ENCODE measurements at regions of chr11 and their contacts with region 1.

Region 1: GRCh38 chr11:112280268-112281126 is 19.8 kb upstream of the PLET1 start:
- DNase-seq: peak; percentile 63
- H3K4me3 ChIP-seq: peak overlapping the region; percentile 55
- H3K27ac ChIP-seq: no peak overlapping the region
- H3K27me3 ChIP-seq: peaks cover 16% of the 10 kb centered on the region
- CTCF ChIP-seq: peak; percentile 81

Region 2: GRCh38 chr11:111926505-111927391 is 353.7 kb before region 1 on chr11:
- CTCF ChIA-PET with region 1: interaction called, 12 read pairs
- POLR2A ChIA-PET with region 1: no interaction called
- DNase-seq: peak; percentile 95
- H3K4me3 ChIP-seq: peak overlapping the region; percentile 59
- H3K27ac ChIP-seq: peak overlapping the region; percentile 47
- H3K27me3 ChIP-seq: no peaks in the 10 kb centered on the region
- CTCF ChIP-seq: no peak

Region 3: DNA sequence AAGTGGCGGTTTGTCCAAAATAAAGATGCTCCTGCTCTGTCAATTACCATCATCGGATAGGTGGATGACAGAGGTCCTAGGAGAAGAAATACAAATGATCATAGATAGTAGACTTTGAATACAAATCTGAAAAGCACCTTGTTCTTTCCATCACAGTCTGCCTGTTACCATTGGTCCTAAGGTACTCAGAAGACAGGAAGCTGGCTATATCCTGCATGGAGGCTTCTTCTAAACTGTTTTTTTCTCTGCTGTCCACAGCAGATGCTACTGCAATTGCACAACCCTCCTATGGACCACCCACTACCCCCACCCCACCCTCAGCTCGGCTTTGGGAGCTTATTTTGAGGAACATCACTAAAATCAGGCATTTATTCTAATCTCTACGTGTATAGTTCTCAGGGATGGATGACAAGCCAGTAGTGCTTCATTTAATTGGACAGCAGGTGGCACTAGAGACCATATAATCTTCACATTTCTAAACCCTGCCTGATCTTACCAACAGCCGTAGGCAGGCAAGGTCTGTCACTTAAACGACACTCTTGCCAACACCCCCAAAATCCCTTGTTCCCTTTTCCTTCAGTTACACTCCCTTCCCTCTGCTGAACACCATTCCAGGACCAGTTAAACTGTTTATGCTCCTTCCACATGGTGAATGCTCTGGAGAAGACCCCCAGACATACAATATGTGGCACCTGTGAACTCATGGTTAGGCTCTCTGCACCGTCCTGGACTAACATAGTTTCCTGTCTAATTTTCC is 60.8 kb before region 1 on chr11:
- CTCF ChIA-PET with region 1: interaction called, 711 read pairs
- POLR2A ChIA-PET with region 1: interaction called, 10 read pairs
- DNase-seq: peak; percentile 52
- H3K4me3 ChIP-seq: no peak overlapping the region
- H3K27ac ChIP-seq: no peak overlapping the region
- H3K27me3 ChIP-seq: no peaks in the 10 kb centered on the region
- CTCF ChIP-seq: peak; percentile 75

Region 4: GRCh38 chr11:112255067-112255720 is 25.3 kb before region 1 on chr11:
- CTCF ChIA-PET with region 1: interaction called, 17 read pairs
- POLR2A ChIA-PET with region 1: no interaction called
- DNase-seq: no peak
- H3K4me3 ChIP-seq: no peak overlapping the region
- H3K27ac ChIP-seq: no peak overlapping the region
- H3K27me3 ChIP-seq: no peaks in the 10 kb centered on the region
- CTCF ChIP-seq: no peak

Region 5: DNA sequence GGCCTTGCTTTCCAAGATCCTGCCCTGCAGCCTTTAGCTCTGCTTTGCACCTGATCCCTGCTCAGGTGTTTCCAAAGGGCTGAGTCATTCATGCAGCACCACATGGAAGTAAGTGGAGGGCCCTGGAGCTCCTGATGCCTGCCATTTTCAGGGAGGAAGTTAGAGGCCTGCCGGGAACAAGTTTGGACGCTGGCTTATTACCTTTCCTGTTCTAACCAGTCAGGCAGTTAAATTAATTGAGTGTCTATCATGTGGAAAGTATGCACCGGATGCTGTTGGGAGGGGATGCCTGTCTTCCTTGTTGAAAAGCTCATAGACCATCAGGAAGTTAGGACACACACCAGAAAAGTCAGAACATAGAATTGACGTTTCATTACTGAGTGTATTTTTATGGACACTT is 53.9 kb after region 1 on chr11:
- CTCF ChIA-PET with region 1: interaction called, 11 read pairs
- POLR2A ChIA-PET with region 1: no interaction called
- DNase-seq: no peak
- H3K4me3 ChIP-seq: no peak overlapping the region
- H3K27ac ChIP-seq: no peak overlapping the region
- H3K27me3 ChIP-seq: no peaks in the 10 kb centered on the region
- CTCF ChIP-seq: no peak

Region 6: DNA sequence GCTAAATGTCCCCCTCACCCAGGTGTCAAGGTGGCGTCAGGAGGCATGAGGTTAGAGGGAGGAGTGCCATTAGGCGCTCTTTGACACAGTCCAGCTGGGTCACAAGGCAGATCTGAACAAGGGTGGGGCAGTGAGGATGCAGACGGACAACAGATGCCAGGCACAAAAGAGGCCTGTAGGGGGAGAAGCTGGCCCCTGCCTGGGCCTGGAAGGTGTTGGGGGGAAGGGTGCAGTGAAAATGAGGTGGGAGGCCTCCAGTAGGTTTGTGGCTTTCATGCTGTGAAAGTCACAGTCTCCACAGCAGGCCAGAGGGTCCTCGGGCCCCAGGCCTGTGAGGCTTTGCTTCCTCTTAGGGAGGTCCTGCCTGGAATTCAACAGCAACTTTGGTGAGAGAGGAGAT is 65.2 kb after region 1 on chr11:
- CTCF ChIA-PET with region 1: no interaction called
- POLR2A ChIA-PET with region 1: no interaction called
- DNase-seq: no peak
- H3K4me3 ChIP-seq: no peak overlapping the region
- H3K27ac ChIP-seq: no peak overlapping the region
- H3K27me3 ChIP-seq: no peaks in the 10 kb centered on the region
- CTCF ChIP-seq: peak; percentile 31

Region 7: DNA sequence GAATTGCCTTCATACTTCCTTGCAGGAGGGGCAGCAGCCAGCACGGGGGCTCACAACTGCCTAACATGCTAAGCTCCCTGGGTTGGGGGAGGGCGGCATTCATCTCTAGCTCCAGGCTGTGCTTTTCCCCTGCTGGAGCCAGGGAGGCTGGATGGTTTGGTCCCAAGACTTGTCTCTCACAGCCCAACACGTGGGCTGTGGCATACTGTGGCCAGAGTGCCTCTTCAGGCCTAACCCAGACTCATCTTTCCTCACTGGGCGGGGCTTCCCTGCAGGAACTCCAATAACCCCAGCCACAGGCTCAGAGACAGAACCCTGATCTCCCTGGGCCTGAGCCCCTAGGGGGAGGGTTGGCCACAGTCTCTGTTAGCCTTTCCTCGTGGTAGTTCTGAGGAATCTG is 102.1 kb after region 1 on chr11:
- CTCF ChIA-PET with region 1: no interaction called
- POLR2A ChIA-PET with region 1: no interaction called
- DNase-seq: no peak
- H3K4me3 ChIP-seq: no peak overlapping the region
- H3K27ac ChIP-seq: no peak overlapping the region
- H3K27me3 ChIP-seq: no peaks in the 10 kb centered on the region
- CTCF ChIP-seq: no peak

Region 8: DNA sequence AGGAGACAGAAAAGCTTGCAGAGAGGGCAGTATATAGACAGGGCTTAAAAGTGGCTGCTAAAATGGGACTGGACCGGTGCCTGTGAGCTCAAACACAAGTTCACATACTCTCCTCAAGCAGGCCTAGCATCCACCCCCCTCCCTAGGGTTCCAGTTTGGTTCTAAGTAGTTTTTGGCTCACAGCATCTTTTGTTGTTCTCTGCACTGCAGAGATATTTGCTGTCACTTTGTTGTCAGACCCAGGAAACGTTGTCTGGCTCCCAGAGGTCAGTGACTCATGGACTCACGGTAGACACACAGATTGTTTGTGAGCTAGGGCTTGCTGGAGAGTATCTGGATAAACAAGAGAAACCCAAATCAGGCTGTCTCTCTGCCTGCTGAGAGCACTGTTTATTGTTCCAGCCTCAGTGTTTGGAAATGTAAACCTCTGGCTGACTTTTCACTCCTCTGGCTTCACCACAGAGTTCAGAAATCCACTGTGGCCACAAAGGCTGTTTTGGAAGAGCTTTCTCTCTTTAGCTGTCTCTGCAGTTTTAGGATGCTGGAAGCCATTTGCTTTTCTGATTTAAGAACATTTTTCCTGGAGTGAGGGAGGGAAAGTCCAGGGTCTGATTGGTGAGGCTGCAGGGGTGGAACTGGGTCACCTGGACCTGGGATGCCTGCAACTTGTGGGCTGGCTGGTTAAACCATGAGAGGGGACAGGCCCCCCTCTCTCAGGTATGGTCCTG is 283.9 kb after region 1 on chr11:
- CTCF ChIA-PET with region 1: interaction called, 14 read pairs
- POLR2A ChIA-PET with region 1: no interaction called
- DNase-seq: peak; percentile 53
- H3K4me3 ChIP-seq: no peak overlapping the region
- H3K27ac ChIP-seq: peak overlapping the region; percentile 3
- H3K27me3 ChIP-seq: peaks cover 9% of the 10 kb centered on the region
- CTCF ChIP-seq: no peak

Region 9: GRCh38 chr11:113289431-113290187 is 1009.1 kb after region 1 on chr11:
- CTCF ChIA-PET with region 1: interaction called, 17 read pairs
- POLR2A ChIA-PET with region 1: no interaction called
- DNase-seq: peak; percentile 20
- H3K4me3 ChIP-seq: no peak overlapping the region
- H3K27ac ChIP-seq: no peak overlapping the region
- H3K27me3 ChIP-seq: no peaks in the 10 kb centered on the region
- CTCF ChIP-seq: peak; percentile 95

Measured in AG04450 (cell line).